ENCODE measurements at regions of chr2 and their contacts with region 1.

Region 1: GRCh38 chr2:126527836-126528507 is 128.0 kb upstream of the GYPC start:
- DNase-seq: peak; percentile 19
- H3K4me3 Mint-ChIP-seq: no peak overlapping the region
- H3K27ac Mint-ChIP-seq: no peak overlapping the region
- H3K4me1 Mint-ChIP-seq: no peaks in the 10 kb centered on the region
- H3K27me3 Mint-ChIP-seq: no peaks in the 10 kb centered on the region
- CTCF ChIP-seq: no peak

Region 2: GRCh38 chr2:125885340-125885739 is 642.6 kb before region 1 on chr2:
- CTCF ChIA-PET with region 1: no interaction called
- intact Hi-C with region 1: no loop called
- DNase-seq: no peak
- H3K4me3 Mint-ChIP-seq: no peak overlapping the region
- H3K27ac Mint-ChIP-seq: no peak overlapping the region
- H3K4me1 Mint-ChIP-seq: no peaks in the 10 kb centered on the region
- H3K27me3 Mint-ChIP-seq: no peaks in the 10 kb centered on the region
- CTCF ChIP-seq: no peak

Region 3: DNA sequence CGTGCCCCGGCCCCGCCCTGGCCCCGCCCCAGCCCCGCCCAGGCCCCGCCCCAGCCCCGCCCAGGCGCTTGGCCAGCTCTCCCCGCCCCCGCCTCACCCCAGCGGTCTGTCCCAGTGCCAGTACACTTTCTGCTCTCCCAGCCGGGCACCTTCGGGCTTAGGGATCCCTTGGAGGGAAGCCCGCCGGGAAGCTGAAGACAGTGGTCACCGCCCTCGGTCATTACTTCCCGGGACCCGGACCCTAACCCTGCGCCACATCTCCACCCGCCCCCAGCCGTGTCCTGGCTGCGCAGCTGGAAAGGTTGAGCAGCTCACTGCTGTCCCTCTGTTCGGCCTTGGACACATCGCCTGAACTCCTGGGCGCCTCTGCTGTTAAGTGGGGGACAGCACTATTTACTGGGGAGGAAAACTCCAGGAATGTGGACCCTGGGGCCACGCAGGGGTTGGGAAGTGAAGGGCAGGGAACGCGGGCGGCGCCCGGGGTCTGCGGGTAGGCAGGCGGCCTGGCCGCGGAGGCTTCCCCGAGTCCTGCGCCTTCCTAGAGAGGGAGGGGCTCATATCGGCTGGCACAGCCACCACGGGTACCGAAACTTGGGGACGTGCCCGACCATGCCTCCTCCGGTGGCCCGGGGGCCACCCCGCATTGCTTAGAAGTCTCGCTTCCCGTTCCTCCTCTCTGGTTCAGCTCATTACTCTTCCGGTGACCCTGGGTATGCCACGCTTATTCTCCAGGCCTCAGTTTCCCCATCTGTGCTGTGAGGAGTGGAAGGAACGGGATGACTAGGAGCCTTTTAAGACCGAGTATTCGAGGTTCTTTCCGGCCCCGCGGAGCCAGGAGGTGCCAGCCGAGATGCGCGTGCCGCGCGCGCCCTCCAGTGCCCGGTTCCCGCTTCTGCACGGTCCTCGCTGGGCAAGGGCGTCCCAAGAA is 249.0 kb after region 1 on chr2:
- CTCF ChIA-PET with region 1: interaction called, 4 read pairs
- intact Hi-C with region 1: loop called (anchors 5 kb)
- DNase-seq: peak; percentile 82
- H3K4me3 Mint-ChIP-seq: peak overlapping the region; percentile 76
- H3K27ac Mint-ChIP-seq: no peak overlapping the region
- H3K4me1 Mint-ChIP-seq: peaks cover 8% of the 10 kb centered on the region
- H3K27me3 Mint-ChIP-seq: peaks cover 67% of the 10 kb centered on the region
- CTCF ChIP-seq: peak; percentile 76

Region 4: GRCh38 chr2:126971481-126972278 is 443.7 kb after region 1 on chr2:
- CTCF ChIA-PET with region 1: interaction called, 4 read pairs
- intact Hi-C with region 1: loop called (anchors 5 kb)
- DNase-seq: peak; percentile 80
- H3K4me3 Mint-ChIP-seq: peak overlapping the region; percentile 43
- H3K27ac Mint-ChIP-seq: no peak overlapping the region
- H3K4me1 Mint-ChIP-seq: no peaks in the 10 kb centered on the region
- H3K27me3 Mint-ChIP-seq: peaks cover 56% of the 10 kb centered on the region
- CTCF ChIP-seq: peak; percentile 79

Measured in Calu3 (cell line).